Calu3 (cell line): ENCODE measurements at regions of chr1 and their contacts with region 1.

Region 1: DNA sequence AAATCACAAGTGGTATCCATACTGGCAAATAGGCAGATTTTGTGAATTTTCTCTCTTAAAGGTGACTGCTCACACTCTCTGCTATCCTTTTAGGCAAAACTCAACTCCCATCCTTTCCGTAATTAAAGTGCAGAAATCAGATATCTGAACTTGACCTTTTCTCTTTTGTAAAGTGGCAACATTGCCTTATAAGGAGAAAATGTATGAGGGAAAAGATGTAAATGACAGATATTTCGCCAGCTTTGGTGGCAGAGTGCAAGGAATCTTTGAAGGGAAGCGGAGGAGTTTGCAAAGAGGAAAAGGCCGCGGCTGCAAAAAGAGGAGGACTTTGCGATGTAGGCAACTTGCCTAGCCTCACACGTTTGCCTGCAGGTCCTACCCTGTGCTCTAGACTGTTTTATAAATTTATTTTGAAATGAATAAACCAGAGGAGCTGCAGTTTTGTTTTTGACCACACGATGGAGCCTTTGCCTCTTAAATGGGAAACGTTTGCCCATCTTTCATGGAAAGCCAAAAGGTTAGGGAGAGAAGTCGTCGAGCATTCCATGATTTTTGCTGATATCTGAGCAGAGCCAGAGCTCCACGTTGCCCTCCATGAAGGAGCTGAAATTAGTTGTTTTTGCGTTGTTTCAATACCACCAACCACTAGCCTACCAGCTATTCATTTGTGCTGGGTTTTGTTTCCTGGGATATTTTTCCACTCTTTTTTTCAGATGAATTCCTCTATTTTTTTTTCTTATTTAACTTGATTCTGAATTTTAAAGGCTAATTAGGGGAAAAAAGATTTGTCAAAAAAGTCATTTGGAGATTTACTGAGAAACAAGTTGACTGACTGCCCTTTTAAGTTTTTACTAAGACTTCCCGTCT is 242.3 kb downstream of the LMX1A start:
- DNase-seq: peak; percentile 70
- H3K4me3 Mint-ChIP-seq: no peak overlapping the region
- H3K27ac Mint-ChIP-seq: no peak overlapping the region
- H3K4me1 Mint-ChIP-seq: peaks cover 7% of the 10 kb centered on the region
- H3K27me3 Mint-ChIP-seq: peaks cover 63% of the 10 kb centered on the region
- CTCF ChIP-seq: peak; percentile 69

Region 2: GRCh38 chr1:165144757-165145397 is 30.6 kb after region 1 on chr1:
- CTCF ChIA-PET with region 1: no interaction called
- intact Hi-C with region 1: loop called (anchors 1 kb)
- DNase-seq: peak; percentile 73
- H3K4me3 Mint-ChIP-seq: no peak overlapping the region
- H3K27ac Mint-ChIP-seq: no peak overlapping the region
- H3K4me1 Mint-ChIP-seq: no peaks in the 10 kb centered on the region
- H3K27me3 Mint-ChIP-seq: peaks cover 37% of the 10 kb centered on the region
- CTCF ChIP-seq: peak; percentile 75

Region 3: DNA sequence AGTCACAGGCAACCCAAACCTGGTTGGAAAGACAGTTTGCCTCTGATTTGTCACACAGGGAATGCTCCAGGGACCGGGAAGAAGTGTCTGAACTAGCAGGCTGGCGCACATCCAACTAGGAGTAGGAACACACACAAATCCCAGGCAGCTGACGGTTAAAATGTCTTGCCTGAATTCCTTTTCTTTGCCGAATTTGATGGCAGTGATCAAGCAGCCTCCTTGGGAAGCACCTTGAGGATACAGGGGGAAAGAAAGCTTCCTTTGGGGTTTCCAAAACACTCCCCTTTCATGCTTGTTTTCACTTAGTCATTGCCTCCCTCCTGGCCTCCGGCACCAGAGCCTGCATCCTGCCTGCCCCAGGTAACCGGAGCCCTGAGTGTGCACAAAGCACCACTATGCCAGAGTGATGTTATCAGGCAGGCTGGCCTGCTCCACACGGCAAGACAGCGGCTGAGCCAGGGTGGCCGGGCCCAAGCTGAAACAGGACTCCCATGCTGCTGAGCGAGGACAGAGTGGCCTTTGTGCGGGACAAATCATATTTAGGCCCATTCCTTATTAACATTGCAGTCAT is 48.5 kb after region 1 on chr1:
- CTCF ChIA-PET with region 1: no interaction called
- intact Hi-C with region 1: no loop called
- DNase-seq: peak; percentile 76
- H3K4me3 Mint-ChIP-seq: no peak overlapping the region
- H3K27ac Mint-ChIP-seq: no peak overlapping the region
- H3K4me1 Mint-ChIP-seq: peaks cover 15% of the 10 kb centered on the region
- H3K27me3 Mint-ChIP-seq: peaks cover 17% of the 10 kb centered on the region
- CTCF ChIP-seq: no peak

Region 4: DNA sequence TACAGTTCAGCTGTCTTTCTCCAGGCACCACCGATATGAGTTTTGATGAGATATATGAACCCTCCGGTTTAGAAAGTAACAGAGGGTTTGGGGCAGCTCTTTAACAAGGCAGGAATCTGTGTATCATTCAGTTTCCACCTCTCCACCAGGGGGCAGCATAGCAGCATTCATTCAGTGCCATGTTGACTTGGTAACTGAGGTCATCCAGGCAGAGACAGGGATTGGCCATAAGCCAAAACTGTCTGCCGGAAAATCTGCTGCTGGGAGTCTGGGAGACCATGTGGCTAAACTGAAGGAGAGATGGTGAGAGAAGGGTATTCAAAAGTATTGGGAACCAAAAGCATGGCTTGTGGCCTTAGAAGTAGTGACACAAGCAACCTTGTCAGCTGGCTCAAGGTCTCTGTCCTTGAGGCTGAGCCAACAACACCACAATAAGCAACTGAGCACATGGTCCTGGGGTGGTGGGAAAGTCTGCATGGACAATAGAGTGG is 143.8 kb after region 1 on chr1:
- CTCF ChIA-PET with region 1: no interaction called
- intact Hi-C with region 1: no loop called
- DNase-seq: peak; percentile 82
- H3K4me3 Mint-ChIP-seq: no peak overlapping the region
- H3K27ac Mint-ChIP-seq: no peak overlapping the region
- H3K4me1 Mint-ChIP-seq: peaks cover 8% of the 10 kb centered on the region
- H3K27me3 Mint-ChIP-seq: peaks cover 67% of the 10 kb centered on the region
- CTCF ChIP-seq: peak; percentile 64